HEK293 (cell line): ENCODE measurements at regions of chr9 and their contacts with region 1.

Region 1: GRCh38 chr9:130107234-130107861 is 53.6 kb downstream of the GPR107 start:
- H3K4me3 ChIP-seq: no peak overlapping the region
- H3K27ac ChIP-seq: no peak overlapping the region
- H3K4me1 ChIP-seq: no peaks in the 10 kb centered on the region
- CTCF ChIP-seq: peak; percentile 66; the same call in 1 of the 2 replicates

Region 2: DNA sequence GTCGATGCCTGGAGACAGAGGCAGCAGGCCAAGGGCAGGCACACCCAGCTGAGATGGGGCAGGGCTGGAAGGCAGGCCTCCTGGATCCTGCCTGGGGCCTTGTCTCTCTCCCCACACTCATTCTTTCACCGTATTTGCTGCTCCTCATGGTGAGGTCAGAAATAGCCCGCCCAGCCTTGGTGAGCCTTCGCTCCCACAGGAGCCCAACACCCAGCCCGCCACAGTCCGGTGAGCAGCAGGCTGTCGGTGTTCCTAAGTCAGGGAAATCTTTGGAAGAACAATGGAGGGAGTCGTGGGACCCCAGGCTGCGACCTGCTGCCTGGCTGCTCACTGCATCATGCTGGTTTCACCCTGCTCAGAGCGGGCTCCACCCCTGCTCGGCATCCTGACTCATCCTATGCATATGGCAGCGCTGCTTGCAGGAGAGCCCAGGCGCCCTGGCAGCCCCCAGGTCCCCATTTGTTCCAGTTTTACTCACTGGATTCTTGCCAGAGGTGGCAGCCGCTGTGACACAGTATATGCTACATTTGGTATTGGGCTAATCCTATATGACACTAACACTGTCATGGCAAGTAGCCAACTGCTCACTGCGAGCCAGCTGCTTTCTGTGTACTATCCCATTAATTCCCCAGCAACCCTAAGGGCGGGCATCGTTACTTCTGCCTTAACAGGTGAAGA is 11.6 kb after region 1 on chr9:
- CTCF ChIA-PET with region 1: interaction called, 26 read pairs
- POLR2A ChIA-PET with region 1: no interaction called
- H3K4me3 ChIP-seq: no peak overlapping the region
- H3K27ac ChIP-seq: 0 out of 2 replicates have a peak overlapping the region, but pooled peaks have one; percentile 41
- H3K4me1 ChIP-seq: peaks cover 8% of the 10 kb centered on the region; the same call in 1 of the 2 replicates
- CTCF ChIP-seq: no peak

Region 3: GRCh38 chr9:130143958-130144366 is 36.6 kb after region 1 on chr9:
- CTCF ChIA-PET with region 1: interaction called, 16 read pairs
- POLR2A ChIA-PET with region 1: no interaction called
- H3K4me3 ChIP-seq: no peak overlapping the region
- H3K27ac ChIP-seq: no peak overlapping the region
- H3K4me1 ChIP-seq: no peaks in the 10 kb centered on the region
- CTCF ChIP-seq: no peak

Region 4: GRCh38 chr9:130229759-130230158 is 122.4 kb after region 1 on chr9:
- CTCF ChIA-PET with region 1: interaction called, 217 read pairs
- POLR2A ChIA-PET with region 1: no interaction called
- H3K4me3 ChIP-seq: no peak overlapping the region
- H3K27ac ChIP-seq: no peak overlapping the region
- H3K4me1 ChIP-seq: no peaks in the 10 kb centered on the region
- CTCF ChIP-seq: no peak

Region 5: GRCh38 chr9:130343445-130343918 is 236.1 kb after region 1 on chr9:
- CTCF ChIA-PET with region 1: interaction called, 80 read pairs
- POLR2A ChIA-PET with region 1: no interaction called
- H3K4me3 ChIP-seq: no peak overlapping the region
- H3K27ac ChIP-seq: no peak overlapping the region
- H3K4me1 ChIP-seq: no peaks in the 10 kb centered on the region
- CTCF ChIP-seq: peak; percentile 75